Tibial artery (tissue), 4 donors: ENCODE measurements at regions of chr12 and their contacts with region 1.

Region 1: DNA sequence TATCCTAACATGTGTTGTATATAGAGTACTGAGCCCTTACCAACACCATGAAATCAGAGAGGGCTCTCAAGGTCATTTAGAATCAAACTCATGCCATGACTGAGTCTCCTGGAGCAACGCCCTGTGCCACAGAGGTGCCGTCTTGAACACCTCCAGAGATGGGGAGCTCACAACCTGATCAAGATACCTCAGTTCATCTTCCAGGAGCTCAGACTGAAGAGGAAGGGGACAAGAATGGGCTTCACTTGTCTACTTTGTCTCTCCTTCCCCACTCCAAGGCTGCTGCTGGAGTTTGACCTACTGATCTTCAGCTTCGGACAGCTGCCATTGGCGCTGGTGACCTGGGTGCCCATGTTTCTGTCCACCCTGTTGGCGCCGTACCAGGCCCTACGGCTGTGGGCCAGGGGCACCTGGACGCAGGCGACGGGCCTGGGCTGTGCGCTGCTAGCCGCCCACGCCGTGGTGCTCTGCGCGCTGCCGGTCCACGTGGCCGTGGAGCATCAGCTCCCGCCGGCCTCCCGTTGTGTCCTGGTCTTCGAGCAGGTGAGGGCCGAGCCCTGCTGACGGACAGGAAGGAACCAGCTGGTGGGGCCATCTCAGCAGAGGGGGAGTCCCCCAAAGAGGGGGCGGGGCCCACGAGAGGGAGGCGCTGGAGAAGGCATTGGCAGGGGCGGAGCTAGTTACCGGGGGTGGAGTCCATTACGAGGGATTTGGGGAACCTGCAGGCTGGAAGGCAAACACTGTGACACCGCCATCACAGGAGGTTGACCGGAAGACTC is 12.0 kb downstream of the SOAT2 start:
- DNase-seq: no peak
- H3K4me3 ChIP-seq: no peak overlapping the region
- H3K27ac ChIP-seq: peak overlapping the region; percentile 78 to 80
- H3K4me1 ChIP-seq: peaks cover 0 to 37% (median 12%) of the 10 kb centered on the region in 4 donors
- H3K27me3 ChIP-seq: no peaks in the 10 kb centered on the region
- CTCF ChIP-seq: no peak

Region 2: DNA sequence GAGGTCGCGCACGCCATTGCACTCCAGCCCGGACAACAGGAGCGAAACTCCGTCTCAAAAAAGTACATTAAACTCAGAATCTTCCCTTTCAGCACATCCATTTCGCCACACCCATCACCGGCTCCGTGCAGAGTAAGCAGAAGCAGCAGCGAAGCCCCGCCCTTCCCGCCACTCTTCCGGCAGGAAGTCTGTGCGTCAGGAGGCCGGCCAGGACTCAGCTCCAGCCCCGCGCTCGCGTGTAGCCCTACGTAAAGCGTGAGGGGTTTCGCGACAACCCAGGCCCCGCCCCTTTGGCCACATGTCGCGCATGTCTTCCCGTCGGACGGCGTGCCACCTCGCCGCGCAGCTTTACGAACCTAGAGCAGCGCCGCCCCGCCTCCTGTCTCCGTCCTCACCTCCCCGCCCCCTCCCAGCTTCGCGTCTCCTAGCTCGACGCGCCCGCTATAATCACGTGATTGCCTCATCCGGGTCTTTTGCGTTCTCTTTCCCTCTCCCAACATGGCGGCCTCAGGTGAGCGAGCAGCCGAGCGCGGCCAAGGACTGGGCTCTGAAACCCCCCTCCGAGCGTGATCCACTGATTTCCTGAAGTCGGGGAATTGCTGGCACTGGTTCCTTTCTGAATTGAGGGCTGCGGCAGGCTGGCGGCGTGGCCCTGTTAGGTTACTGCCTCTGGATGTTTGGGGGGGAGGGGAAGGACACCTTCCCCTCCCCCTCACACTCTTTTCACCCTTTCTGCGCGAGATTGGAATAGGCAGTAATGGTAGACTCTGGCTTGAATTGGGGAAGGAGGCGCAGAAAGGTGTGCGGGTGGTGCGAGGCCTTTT is 109.1 kb before region 1 on chr12 and contains the start of gene EIF4B:
- intact Hi-C with region 1: no loop called
- DNase-seq: peak; percentile 100
- H3K4me3 ChIP-seq: peak within 1 kb of the TSS; percentile 82 to 87
- H3K27ac ChIP-seq: peak within 1 kb of the TSS; percentile 91
- H3K4me1 ChIP-seq: peaks cover 0 to 49% (median 39%) of the 10 kb centered on the region in 4 donors
- H3K27me3 ChIP-seq: peaks cover 0 to under 1% of the 10 kb centered on the region in 2 donors
- CTCF ChIP-seq: no peak

Region 3: DNA sequence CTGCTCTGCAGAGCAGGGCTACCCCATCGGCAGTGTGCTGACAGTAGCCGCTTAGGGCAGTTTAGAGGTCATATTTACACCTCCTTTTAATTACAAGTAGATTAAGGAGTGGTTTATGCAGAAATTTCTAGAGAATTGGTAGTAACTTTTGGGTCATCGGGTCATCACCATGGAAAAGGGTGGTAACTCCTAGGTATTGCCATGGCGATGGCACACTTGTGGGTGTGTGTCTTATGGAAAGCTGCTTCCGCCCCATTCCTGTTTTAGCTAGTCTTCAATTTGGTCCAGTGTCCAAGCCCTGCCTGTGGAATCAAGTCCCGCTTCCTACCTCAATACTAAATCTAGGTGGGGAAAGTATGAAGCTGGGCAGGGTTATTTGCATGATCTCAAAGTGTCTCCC is 35.7 kb after region 1 on chr12:
- intact Hi-C with region 1: loop called (anchors 5 kb)
- DNase-seq: no peak
- H3K4me3 ChIP-seq: no peak overlapping the region
- H3K27ac ChIP-seq: no peak overlapping the region
- H3K4me1 ChIP-seq: peaks cover 0 to 51% (median 8%) of the 10 kb centered on the region in 4 donors
- H3K27me3 ChIP-seq: no peaks in the 10 kb centered on the region
- CTCF ChIP-seq: no peak